Activated CD4-positive, alpha-beta memory T cell treated with anti-CD3 and anti-CD28 coated beads, Interleukin-2, amount 10 ng/mL, durations not matched to agents 7 days and 5 days (primary cell): ENCODE measurements at regions of chr7 and their contacts with region 1.

Region 1: DNA sequence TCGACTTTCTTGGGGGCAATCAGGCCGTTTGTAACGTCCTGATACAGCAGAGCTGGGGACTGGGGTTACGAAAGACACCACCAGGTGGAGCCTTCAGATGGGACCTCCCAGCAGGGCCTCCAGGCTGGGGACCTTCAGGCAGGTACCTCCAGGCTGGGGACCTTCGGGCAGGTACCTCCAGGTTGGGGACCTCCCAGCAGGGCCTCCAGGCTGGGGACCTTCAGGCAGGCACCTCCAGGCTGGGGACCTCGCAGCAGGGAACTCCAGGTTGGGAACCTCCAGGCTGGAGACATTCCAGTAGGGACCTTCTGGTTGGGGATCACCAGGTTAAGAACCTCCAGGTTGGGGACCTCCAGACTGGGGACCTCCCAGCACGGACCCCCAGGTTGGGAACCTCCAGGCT is 23.5 kb upstream of the GPR146 start:
- DNase-seq: no peak
- H3K4me3 Mint-ChIP-seq: no peak overlapping the region
- H3K27ac Mint-ChIP-seq: no peak overlapping the region
- H3K4me1 Mint-ChIP-seq: peaks cover 7% of the 10 kb centered on the region
- H3K27me3 Mint-ChIP-seq: no peaks in the 10 kb centered on the region

Region 2: DNA sequence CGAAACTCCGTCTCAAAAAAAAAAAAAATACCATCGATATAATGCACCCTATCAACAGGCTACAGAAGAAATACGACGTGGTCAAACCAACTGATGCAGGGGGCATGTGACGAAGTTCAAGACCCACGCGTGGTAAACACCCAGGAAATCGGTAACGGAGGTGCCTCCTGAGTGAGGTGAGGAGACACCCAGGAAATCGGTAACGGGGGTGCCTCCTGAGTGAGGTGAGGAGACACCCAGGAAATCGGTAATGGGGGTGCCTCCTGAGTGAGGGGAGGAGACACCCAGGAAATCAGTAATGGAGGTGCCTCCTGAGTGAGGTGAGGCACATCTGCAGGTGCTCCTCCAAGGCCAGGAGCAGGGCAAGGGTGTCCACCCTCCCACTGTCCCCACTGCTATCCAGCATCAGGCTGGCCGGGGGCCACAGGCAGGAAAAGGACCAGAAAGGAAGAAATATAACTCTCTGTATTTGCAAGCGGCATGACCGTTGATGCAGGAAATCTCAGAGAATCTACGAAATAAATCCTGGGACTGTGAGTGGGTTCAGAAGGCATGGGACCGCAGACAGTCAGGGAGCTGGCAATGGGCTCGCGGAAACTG is 12.8 kb after region 1 on chr7:
- CTCF ChIA-PET with region 1: no interaction called
- POLR2A ChIA-PET with region 1: no interaction called
- DNase-seq: peak; percentile 39
- H3K4me3 Mint-ChIP-seq: no peak overlapping the region
- H3K27ac Mint-ChIP-seq: peak overlapping the region; percentile 64
- H3K4me1 Mint-ChIP-seq: peaks cover 49% of the 10 kb centered on the region
- H3K27me3 Mint-ChIP-seq: no peaks in the 10 kb centered on the region

Region 3: DNA sequence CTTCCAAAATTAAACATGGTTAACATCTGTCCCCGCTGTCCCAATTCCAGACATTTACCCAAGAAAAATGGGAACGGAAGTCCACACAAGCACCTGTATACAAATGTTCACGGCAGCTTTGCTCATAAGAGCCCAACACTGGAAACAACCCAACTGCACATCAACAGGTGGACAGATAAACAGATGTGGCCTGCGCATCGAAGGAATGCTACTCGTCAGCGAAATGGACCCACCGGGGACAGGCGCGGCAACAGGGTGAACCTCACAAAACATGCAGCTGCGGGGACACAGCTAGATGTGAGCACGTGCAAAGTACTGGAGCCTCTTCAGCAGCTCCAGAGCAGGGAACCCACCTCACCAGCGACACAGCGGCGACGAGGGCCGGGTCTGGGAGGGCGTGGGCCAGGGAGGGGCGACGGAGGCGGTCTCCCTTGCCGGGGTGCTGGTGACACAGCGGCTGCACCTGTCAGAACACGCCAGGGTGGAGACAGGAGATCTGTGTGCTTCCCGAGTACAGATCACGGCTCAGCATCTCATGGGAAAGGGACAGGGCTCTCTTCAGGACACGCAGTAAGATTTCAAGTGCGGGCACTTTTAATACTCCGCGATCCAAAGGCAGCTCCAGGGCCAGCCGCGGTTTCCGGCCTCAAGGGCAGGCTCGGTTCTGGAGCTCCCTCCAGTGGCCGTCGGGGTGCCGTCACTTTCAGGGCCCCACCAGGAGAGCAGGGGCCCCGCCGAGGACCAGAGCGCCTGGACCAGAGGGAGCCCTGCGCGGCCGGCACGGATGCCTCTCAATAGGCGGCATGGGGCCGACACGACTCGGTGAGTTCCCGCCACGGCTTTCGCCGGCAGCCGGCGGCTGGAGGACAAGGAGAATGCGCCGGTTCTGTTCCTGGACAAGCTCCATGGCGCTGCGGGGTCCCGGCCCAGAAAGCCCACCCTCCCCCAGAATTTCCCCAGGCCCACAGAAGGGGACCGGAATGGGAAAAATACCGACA is 44.7 kb after region 1 on chr7:
- CTCF ChIA-PET with region 1: interaction called, 15 read pairs
- POLR2A ChIA-PET with region 1: no interaction called
- DNase-seq: peak; percentile 89
- H3K4me3 Mint-ChIP-seq: no peak overlapping the region
- H3K27ac Mint-ChIP-seq: no peak overlapping the region
- H3K4me1 Mint-ChIP-seq: peaks cover 6% of the 10 kb centered on the region
- H3K27me3 Mint-ChIP-seq: peaks cover 1% of the 10 kb centered on the region